Colonic mucosa (tissue), 4 donors: ENCODE measurements at regions of chr1 and their contacts with region 1.

Region 1: GRCh38 chr1:204207136-204207616 is 6.6 kb downstream of the GOLT1A start:
- DNase-seq: peak; percentile 79
- H3K4me3 ChIP-seq: no peak overlapping the region
- H3K27ac ChIP-seq: no peak overlapping the region
- H3K4me1 ChIP-seq: no peaks in the 10 kb centered on the region
- H3K27me3 ChIP-seq: no peaks in the 10 kb centered on the region
- CTCF ChIP-seq: peak; percentile 86

Region 2: DNA sequence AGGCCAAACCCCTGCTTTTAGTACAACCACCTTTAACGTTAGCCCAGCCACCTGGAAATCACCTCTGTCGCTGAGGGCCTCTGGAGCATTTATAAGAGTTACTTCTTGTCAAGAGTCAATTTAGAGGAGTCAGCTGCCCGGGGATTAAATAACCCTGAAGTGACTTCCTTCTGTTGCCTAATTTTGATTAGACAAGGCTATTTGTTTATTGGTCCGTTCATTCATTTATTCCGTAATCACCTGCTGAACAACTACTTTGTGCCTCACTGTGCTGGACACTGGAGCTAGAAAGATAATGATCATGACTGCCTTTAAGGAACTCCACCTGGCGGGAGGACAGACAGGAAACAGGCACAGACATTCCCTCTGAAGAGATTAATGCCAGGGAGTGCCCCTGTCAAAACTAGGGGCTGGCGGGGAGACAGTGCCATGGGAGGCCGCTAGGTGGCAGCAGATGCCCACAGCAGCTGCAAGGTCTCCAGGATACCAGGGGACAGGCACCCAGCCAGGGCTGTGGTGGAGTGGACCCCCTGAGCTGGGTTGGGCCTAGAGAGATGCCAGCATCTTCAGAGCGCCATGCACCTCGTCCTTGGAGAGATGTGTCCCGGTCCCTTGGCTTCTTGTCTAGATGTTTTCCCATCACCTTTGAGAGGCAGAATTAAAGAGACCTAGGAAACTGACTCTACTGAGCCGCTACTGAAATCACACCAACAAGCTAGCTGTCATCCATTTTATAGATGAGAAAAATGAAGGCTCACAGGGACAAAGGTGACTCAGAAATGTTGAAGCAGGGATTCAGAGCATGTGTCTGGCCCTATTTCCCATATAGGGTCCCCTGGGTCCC is 44.7 kb before region 1 on chr1:
- intact Hi-C with region 1: loop called (anchors 5 kb)
- DNase-seq: peak; percentile 85
- H3K4me3 ChIP-seq: no peak overlapping the region
- H3K27ac ChIP-seq: no peak overlapping the region
- H3K4me1 ChIP-seq: peaks cover 3% of the 10 kb centered on the region
- H3K27me3 ChIP-seq: no peaks in the 10 kb centered on the region
- CTCF ChIP-seq: peak; percentile 100